A549 (cell line): ENCODE measurements at regions of chr2 and their contacts with region 1.

Region 1: DNA sequence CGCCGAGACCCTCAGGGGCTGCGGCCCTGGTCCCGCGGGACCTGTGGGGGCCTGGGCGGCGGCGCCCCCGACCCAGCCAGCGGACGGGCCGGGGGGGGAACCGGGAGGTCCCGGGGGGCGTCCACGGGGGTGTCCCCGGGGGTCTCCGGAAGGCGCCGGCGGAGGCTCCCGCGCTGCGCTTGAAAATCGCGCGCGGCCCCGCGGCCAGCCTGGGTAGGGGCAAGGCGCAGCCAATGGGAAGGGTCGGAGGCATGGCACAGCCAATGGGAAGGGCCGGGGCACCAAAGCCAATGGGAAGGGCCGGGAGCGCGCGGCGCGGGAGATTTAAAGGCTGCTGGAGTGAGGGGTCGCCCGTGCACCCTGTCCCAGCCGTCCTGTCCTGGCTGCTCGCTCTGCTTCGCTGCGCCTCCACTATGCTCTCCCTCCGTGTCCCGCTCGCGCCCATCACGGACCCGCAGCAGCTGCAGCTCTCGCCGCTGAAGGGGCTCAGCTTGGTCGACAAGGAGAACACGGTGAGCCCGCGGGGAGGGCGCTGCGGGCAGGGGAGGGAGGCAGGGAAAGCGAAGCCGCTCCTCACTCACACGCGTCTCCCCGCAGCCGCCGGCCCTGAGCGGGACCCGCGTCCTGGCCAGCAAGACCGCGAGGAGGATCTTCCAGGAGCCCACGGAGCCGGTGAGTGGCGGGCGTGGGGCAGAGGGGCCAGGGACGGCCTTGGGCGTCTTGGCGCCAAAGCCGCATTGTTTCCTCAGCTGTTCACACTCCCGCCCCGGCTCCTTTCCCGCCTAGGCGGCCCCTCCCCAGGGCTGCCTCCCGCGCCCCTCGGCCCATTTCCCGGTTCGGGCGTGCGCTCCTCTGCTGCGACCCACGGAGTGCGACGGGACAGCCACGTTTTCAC is at the start of gene RRM2:
- DNase-seq: peak; percentile 97
- ATAC-seq: peak; percentile 73 to 88
- H3K4me3 ChIP-seq: peak within 1 kb of the TSS; percentile 76
- H3K27ac ChIP-seq: peak within 1 kb of the TSS; percentile 88 to 95
- H3K4me1 ChIP-seq: peaks cover 30% of the 10 kb centered on the region
- CTCF ChIP-seq: no peak
- EP300 ChIP-seq: no peak
- POLR2A ChIP-seq: peak; percentile 91
- RAD21 ChIP-seq: no peak
- polyA plus RNA-seq, gene RRM2: 65.1 and 84.4 TPM in 2 replicates

Region 2: GRCh38 chr2:10079234-10079869 is 43.3 kb before region 1 on chr2:
- CTCF ChIA-PET with region 1: interaction called, 10 read pairs
- POLR2A ChIA-PET with region 1: interaction called, 5 read pairs
- DNase-seq: peak; percentile 36 to 58
- ATAC-seq: peak; percentile 75 to 82
- H3K4me3 ChIP-seq: peak overlapping the region; percentile 70
- H3K27ac ChIP-seq: peak overlapping the region; percentile 77 to 92
- H3K4me1 ChIP-seq: 0 out of 3 replicates have a peak, but pooled peaks cover 3% of the 10 kb centered on the region
- CTCF ChIP-seq: no peak
- EP300 ChIP-seq: no peak
- POLR2A ChIP-seq: no peak
- RAD21 ChIP-seq: no peak

Region 3: DNA sequence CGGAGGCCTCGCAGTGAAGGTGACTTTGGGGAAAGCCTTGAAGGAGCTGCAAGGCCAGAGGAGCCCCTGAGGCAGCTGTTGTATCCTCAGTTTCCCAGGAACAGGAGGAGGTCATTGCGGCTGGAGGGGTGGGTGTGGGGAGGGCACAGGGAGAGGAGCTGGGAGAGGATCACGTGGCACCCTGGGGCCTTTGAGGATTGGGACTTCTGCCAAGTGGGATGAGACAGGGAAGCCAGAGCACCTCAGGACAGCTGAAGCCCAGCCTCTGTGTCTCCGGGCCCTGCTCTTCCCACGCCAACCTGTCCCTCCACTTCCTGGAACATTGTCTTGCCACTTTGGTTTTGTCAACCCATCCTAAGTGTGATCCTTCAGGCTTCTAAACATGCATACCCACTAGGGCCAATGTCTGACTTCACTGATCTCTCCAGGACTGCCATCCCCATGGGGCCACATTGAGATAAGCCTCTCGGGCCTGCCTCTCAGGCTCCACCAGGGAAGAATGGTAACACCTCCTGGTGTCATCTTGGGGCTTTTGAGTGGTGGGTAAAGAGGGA is 19.4 kb before region 1 on chr2:
- CTCF ChIA-PET with region 1: interaction called, 16 read pairs
- POLR2A ChIA-PET with region 1: no interaction called
- DNase-seq: no peak
- ATAC-seq: no peak
- H3K4me3 ChIP-seq: no peak overlapping the region
- H3K27ac ChIP-seq: no peak overlapping the region
- H3K4me1 ChIP-seq: peaks cover 7% of the 10 kb centered on the region; the same call in 1 of the 3 replicates
- CTCF ChIP-seq: no peak
- EP300 ChIP-seq: no peak
- POLR2A ChIP-seq: no peak
- RAD21 ChIP-seq: no peak

Region 4: DNA sequence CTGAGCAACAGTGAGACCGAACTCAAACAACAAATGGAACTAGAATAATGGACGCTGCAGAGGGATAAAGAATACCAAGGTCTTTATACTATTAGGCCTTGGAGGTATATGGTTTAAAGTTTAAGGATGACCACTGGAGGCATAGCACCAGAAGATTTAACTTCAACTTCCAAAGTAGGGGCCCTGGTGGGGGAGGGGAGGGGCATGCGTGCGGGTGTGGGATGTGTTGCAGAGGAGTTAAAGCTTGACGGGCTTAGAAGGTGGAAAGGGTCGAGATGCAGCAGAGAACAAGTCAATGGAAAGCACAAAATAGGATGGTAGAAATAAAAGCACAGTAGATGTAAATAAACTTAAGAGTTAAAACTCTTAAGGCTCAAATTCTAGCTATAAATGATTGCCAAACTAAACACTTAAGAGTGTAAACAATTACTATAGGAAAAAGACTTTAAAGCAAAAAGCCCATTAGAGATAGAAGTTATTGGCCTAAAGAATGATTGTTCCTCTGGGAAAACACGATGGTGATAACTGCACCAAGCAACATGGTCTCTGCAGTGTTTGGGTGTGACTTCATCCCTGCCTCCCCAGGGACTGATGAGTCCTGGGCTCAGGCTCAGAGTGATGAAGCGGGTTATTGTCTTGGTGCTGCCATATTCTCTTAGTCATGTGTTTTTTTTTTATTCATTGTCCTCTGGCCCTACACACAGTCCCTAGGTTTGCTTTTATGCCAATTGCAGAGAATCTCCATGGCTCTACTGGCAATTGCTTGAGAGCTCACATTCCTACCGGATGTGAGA is 12.9 kb after region 1 on chr2:
- CTCF ChIA-PET with region 1: interaction called, 191 read pairs
- POLR2A ChIA-PET with region 1: no interaction called
- DNase-seq: peak in 1 of 2 experiments; percentile 46
- ATAC-seq: peak in 1 of 2 experiments; percentile 17; a peak in 3 of 6 replicates
- H3K4me3 ChIP-seq: no peak overlapping the region
- H3K27ac ChIP-seq: 0 out of 6 replicates have a peak overlapping the region, but pooled peaks of 1 of the 2 experiments have one; percentile 3
- H3K4me1 ChIP-seq: peaks cover 32% of the 10 kb centered on the region
- CTCF ChIP-seq: no peak
- EP300 ChIP-seq: no peak
- POLR2A ChIP-seq: no peak
- RAD21 ChIP-seq: no peak

Region 5: GRCh38 chr2:10188216-10188615 is 65.6 kb after region 1 on chr2:
- CTCF ChIA-PET with region 1: no interaction called
- POLR2A ChIA-PET with region 1: no interaction called
- DNase-seq: peak; percentile 41 to 77
- ATAC-seq: peak; percentile 19 to 87; a peak in 3 of 6 replicates
- H3K4me3 ChIP-seq: no peak overlapping the region
- H3K27ac ChIP-seq: no peak overlapping the region
- H3K4me1 ChIP-seq: no peaks in the 10 kb centered on the region
- CTCF ChIP-seq: peak; percentile 49
- EP300 ChIP-seq: no peak
- POLR2A ChIP-seq: no peak
- RAD21 ChIP-seq: peak; percentile 28 to 61; a peak in 4 of 5 replicates

Region 6: DNA sequence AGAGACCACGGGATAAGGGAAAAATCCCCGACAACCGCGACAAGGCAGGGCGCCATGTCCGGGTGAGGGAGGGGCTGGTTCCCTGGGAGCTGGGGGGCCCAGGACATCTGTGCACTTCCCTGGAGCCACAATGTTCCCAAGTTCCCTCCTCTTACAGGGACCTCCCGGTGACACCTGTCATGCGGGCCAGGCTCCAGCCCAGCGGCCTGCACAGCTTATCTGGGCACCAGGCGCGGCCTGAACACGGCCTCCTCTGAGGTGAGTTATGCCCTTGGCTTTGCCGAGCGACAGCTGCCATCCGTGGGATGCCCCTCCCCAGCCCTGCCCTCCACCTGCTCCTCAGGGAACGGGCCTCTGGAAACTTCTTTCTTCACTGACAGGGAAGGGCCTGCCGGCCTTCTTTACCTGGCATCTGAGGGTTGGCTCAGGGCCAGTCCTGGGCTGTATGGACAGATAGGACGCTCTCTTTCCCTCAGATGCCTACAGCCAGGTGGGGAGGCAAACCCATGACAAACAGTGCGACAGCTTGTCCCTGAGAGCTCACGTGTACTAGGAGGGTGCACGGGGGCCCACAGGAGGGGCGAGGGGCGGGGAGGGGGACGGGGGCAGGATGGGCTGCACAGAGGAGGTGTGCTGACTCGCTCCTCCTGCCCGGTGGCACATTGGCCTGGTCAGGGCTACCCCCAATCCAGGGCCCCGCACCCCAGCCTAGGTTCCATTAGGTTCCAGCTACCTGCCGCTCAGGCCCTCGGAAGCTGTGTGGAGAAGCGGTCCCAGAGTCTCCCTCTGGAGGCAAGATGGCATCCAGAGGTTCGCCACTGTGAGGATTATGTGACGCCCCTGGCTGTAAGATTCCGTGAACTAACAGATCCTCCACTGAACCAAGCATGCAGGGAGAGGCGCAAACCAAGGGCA is 145.2 kb after region 1 on chr2:
- CTCF ChIA-PET with region 1: interaction called, 16 read pairs
- POLR2A ChIA-PET with region 1: no interaction called
- DNase-seq: no peak
- ATAC-seq: no peak
- H3K4me3 ChIP-seq: no peak overlapping the region
- H3K27ac ChIP-seq: no peak overlapping the region; a peak in 1 of 6 replicates
- H3K4me1 ChIP-seq: peaks cover 22% of the 10 kb centered on the region
- CTCF ChIP-seq: no peak
- EP300 ChIP-seq: no peak
- POLR2A ChIP-seq: no peak
- RAD21 ChIP-seq: no peak

Region 7: DNA sequence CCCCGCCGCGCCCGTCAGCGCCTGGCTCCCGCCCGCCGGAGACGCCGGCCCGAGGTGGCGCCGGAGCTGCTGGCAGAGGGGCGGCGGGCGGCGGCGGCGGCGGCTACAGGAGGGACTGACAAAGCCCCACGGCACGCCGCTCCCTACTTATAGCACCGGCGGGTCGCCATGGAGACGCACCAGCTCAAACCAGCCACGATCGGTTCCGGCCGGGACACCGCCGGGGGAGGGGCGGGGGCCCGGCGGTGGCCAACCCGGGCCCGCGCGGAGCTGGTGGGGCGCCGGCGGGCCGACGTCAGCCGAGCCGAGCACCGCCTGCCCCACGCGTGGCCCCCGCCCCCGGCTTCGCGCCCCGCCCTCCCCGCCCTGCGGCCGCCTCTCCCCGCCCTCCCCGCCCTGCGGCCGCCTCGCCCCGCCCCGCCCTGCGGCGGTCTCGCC is 325.6 kb after region 1 on chr2 and contains the start of gene ODC1:
- CTCF ChIA-PET with region 1: interaction called, 16 read pairs
- POLR2A ChIA-PET with region 1: interaction called, 3 read pairs
- DNase-seq: peak; percentile 80 to 93
- ATAC-seq: peak; percentile 69 to 72
- H3K4me3 ChIP-seq: peak within 1 kb of the TSS; percentile 78
- H3K27ac ChIP-seq: peak within 1 kb of the TSS; percentile 90 to 98
- H3K4me1 ChIP-seq: peaks cover 56% of the 10 kb centered on the region
- CTCF ChIP-seq: no peak
- EP300 ChIP-seq: no peak; a peak in 2 of 5 replicates
- POLR2A ChIP-seq: peak; percentile 59
- RAD21 ChIP-seq: no peak
- polyA plus RNA-seq, gene ODC1: 198 and 265 TPM in 2 replicates